ENCODE measurements at regions of chr4 and their contacts with region 1.

Region 1: GRCh38 chr4:153466081-153466948 is at the start of gene TMEM131L:
- DNase-seq: peak; percentile 13 to 84 (median 66)
- H3K4me3 ChIP-seq: peak within 1 kb of the TSS; percentile 57 to 90 (median 82)
- H3K27ac ChIP-seq: peak within 1 kb of the TSS in 58 of 59 donors; percentile 7 to 85 (median 72)
- H3K27me3 ChIP-seq: no peaks in the 10 kb centered on the region
- CTCF ChIP-seq: peak in 32 of 56 donors; percentile 3 to 43 (median 26)
- total RNA-seq, gene TMEM131L: 3.8 to 16.5 (median 8.7) TPM

Region 2: DNA sequence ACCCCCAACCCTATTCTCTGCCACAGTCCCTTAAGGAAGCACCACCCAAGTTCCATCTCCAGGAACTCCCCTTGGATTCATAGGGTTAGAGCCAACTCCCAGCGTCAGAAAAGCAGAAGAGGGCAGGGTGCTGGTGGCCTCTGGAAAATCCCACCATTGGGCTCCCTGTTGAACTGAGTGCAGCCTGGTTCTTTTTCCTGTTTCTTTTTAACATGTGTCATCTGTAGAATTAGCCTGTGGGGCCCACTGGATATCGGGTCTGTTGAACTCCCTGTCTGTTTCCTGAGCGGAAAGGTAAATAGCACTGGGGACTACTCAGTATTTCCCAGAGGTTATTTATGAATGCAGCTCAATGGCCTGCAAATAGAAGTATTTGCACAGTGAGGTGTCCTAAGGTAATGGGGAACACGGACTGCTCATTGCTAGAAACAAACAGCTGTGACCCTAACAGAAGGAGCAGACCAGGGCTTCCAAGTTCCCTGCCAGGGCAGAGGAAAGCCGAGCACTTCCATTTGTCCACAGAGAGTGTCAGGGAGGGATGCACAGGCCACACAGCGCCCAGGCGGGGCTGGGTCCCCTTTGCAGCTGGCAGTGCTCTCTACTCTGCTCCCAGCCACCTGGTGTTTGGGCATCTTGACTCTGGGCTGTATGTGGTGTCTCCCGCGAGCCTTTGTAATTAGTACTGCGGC is 427.5 kb before region 1 on chr4:
- intact Hi-C with region 1: no loop called
- DNase-seq: no peak
- H3K4me3 ChIP-seq: no peak overlapping the region
- H3K27ac ChIP-seq: no peak overlapping the region
- H3K27me3 ChIP-seq: no peaks in the 10 kb centered on the region
- CTCF ChIP-seq: no peak

Region 3: GRCh38 chr4:153221783-153222706 is 244.3 kb before region 1 on chr4:
- intact Hi-C with region 1: loop called in 1 of 2 experiments (anchors 10 kb)
- DNase-seq: peak; percentile 32 to 83 (median 66)
- H3K4me3 ChIP-seq: peak overlapping the region; percentile 41 to 84 (median 70)
- H3K27ac ChIP-seq: peak overlapping the region; percentile 62 to 97 (median 94)
- H3K27me3 ChIP-seq: no peaks in the 10 kb centered on the region
- CTCF ChIP-seq: no peak

Region 4: GRCh38 chr4:153409412-153409811 is 56.9 kb before region 1 on chr4:
- intact Hi-C with region 1: no loop called
- DNase-seq: no peak
- H3K4me3 ChIP-seq: no peak overlapping the region
- H3K27ac ChIP-seq: no peak overlapping the region
- H3K27me3 ChIP-seq: no peaks in the 10 kb centered on the region
- CTCF ChIP-seq: no peak

Region 5: GRCh38 chr4:153488006-153488891 is 21.9 kb after region 1 on chr4:
- intact Hi-C with region 1: loop called in 1 of 2 experiments (anchors 2 kb)
- DNase-seq: peak in 9 of 10 donors; percentile 15 to 72 (median 62)
- H3K4me3 ChIP-seq: peak overlapping the region in 52 of 59 donors; percentile 0 to 58 (median 30)
- H3K27ac ChIP-seq: peak overlapping the region in 48 of 59 donors; percentile 5 to 81 (median 60)
- H3K27me3 ChIP-seq: no peaks in the 10 kb centered on the region
- CTCF ChIP-seq: peak in 12 of 56 donors; percentile 12 to 42 (median 26)

Region 6: DNA sequence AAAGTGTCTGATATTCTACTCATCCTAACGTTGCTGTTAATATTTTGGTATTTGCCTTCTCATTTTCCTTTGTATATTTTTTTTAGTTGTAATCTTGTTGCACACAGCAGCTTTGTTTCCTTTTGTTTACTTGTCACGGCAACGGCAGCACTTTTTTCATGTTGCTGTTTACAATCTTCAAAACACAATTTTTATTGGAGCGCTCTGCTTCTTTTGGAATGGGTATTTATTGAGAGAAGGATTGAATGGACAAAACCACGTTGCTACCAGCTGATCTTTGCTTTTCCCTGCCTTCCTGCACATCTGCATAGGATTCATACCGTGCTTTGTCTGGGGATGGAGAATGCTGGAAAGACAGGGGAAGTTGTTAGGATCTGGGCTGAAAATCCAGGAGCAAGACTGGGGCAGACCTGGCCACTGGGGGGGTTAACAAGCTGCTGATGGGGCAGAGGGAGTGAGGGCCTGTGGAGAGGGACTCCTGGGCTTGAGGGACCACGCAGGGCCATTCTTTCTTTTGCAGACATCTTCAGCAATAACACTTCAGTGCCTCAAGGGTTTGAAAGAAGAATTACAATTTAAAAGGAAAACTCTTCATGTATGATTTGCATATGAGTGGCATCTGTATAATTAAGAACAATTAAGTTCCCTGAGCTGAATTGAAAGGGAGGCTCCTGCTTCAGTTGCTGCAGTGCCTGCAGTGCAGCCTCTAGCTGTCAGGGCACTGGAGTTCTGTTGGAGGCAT is 69.6 kb after region 1 on chr4:
- intact Hi-C with region 1: loop called in 1 of 2 experiments (anchors 10 kb)
- DNase-seq: no peak
- H3K4me3 ChIP-seq: peak overlapping the region in 18 of 59 donors; percentile 2 to 43 (median 18)
- H3K27ac ChIP-seq: peak overlapping the region in 6 of 59 donors; percentile 2 to 25 (median 15)
- H3K27me3 ChIP-seq: no peaks in the 10 kb centered on the region
- CTCF ChIP-seq: no peak

Region 7: GRCh38 chr4:153585026-153585425 is 118.7 kb after region 1 on chr4:
- intact Hi-C with region 1: no loop called
- DNase-seq: no peak
- H3K4me3 ChIP-seq: no peak overlapping the region
- H3K27ac ChIP-seq: no peak overlapping the region
- H3K27me3 ChIP-seq: no peaks in the 10 kb centered on the region
- CTCF ChIP-seq: no peak